ENCODE measurements at regions of chr3 and their contacts with region 1.

Region 1: GRCh38 chr3:141452036-141452435 is 34.8 kb upstream of the RASA2 start:
- DNase-seq: no peak
- ATAC-seq: peak; percentile 72 to 73

Region 2: GRCh38 chr3:141311496-141312353 is 140.3 kb before region 1 on chr3:
- intact Hi-C with region 1: loop called (anchors 5 kb)
- DNase-seq: peak; percentile 99
- ATAC-seq: peak; percentile 99

Region 3: GRCh38 chr3:141360888-141361598 is 91.0 kb before region 1 on chr3:
- intact Hi-C with region 1: loop called (anchors 2 kb)
- DNase-seq: no peak
- ATAC-seq: peak; percentile 84 to 86

Region 4: GRCh38 chr3:141498598-141499223 is 46.7 kb after region 1 on chr3:
- intact Hi-C with region 1: no loop called
- DNase-seq: peak; percentile 34
- ATAC-seq: peak; percentile 84 to 87

Region 5: GRCh38 chr3:141746962-141747361 is 294.9 kb after region 1 on chr3:
- intact Hi-C with region 1: no loop called
- DNase-seq: no peak
- ATAC-seq: no peak